ENCODE measurements at regions of chr7 and their contacts with region 1.

Region 1: DNA sequence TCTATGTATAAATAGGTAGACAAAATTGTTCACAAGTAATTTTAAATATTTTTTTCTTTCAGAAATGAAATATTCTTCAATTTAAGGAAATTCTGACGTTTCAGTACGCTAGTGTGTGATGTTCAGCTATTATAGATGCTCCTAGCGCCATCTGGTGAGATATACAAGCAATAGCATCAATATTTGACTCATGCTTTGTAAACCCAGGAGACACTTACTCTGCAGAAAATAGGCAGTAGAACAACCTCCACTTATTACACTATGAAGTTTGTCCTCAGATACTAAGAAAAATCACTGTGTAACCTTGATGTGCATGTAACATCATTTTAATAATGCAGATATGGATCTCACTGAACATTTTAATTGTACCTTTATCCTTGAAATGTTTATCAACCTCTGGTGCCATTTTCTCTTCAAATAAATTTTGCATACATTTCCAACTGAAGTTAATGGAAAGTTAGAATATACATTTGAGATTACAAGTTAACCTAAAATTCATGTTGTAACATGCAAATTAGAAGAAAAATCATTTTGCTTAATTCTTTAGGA is 151.5 kb upstream of the FAM3C start:
- DNase-seq: no peak
- H3K4me3 ChIP-seq: no peak overlapping the region
- H3K27ac ChIP-seq: no peak overlapping the region
- H3K4me1 ChIP-seq: peaks cover 0 to 34% (median 12%) of the 10 kb centered on the region in 3 donors
- H3K27me3 ChIP-seq: no peaks in the 10 kb centered on the region
- CTCF ChIP-seq: peak; percentile 58 to 89 (median 72)
- POLR2A ChIP-seq: no peak

Region 2: DNA sequence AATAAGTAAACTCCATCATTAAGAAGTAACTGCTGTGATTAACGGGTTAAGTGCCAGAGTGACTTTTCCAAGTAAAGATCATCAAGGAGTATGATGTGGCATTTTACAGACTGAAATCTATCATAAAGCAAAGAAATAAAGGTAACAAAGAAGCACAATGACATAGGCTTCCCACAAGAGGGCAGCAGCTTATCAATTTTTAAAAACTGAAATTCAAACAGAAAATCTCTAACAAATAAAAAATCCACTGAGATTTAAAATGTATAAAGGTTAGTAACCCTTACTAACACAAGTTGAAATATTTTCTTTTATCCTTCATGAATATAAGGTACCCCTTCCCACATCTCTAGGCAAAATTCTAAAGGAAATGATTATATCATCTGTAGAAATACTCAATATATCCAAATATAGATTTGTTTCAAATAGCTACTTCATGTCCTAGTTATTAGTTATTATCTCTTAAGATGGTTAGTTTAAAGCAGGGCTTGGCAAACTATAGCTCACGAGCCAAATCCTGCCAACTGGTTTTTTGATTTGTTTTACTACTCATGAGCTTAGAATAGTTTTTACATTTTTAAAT is 180.7 kb before region 1 on chr7:
- intact Hi-C with region 1: loop called (anchors 5 kb)
- DNase-seq: no peak
- H3K4me3 ChIP-seq: no peak overlapping the region
- H3K27ac ChIP-seq: no peak overlapping the region
- H3K4me1 ChIP-seq: peaks cover 0 to 9% (median 4%) of the 10 kb centered on the region in 3 donors
- H3K27me3 ChIP-seq: no peaks in the 10 kb centered on the region
- CTCF ChIP-seq: peak; percentile 67 to 89 (median 80)
- POLR2A ChIP-seq: no peak

Region 3: DNA sequence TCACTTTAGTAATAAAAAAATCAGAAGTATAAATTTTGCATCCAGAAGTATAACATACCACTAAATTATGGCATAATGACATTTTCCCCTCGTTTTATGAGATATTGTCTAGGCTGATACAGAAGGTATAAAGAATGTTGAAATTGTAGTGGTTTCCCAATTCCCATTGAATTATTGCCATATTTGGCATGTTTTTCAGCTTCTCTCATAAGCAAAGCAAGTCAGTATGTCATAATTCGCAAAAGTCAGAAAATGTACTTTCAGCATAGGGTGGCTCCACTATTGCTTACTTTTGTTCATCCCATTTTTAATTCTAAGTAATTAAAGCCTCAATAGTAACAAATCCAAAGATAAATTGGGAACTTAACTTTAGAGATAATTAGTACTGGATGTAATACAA is 305.7 kb after region 1 on chr7:
- intact Hi-C with region 1: no loop called
- DNase-seq: no peak
- H3K4me3 ChIP-seq: no peak overlapping the region
- H3K27ac ChIP-seq: no peak overlapping the region
- H3K4me1 ChIP-seq: no peaks in the 10 kb centered on the region
- H3K27me3 ChIP-seq: no peaks in the 10 kb centered on the region
- CTCF ChIP-seq: no peak
- POLR2A ChIP-seq: no peak